ENCODE measurements at regions of chr9 and their contacts with region 1.

Region 1: DNA sequence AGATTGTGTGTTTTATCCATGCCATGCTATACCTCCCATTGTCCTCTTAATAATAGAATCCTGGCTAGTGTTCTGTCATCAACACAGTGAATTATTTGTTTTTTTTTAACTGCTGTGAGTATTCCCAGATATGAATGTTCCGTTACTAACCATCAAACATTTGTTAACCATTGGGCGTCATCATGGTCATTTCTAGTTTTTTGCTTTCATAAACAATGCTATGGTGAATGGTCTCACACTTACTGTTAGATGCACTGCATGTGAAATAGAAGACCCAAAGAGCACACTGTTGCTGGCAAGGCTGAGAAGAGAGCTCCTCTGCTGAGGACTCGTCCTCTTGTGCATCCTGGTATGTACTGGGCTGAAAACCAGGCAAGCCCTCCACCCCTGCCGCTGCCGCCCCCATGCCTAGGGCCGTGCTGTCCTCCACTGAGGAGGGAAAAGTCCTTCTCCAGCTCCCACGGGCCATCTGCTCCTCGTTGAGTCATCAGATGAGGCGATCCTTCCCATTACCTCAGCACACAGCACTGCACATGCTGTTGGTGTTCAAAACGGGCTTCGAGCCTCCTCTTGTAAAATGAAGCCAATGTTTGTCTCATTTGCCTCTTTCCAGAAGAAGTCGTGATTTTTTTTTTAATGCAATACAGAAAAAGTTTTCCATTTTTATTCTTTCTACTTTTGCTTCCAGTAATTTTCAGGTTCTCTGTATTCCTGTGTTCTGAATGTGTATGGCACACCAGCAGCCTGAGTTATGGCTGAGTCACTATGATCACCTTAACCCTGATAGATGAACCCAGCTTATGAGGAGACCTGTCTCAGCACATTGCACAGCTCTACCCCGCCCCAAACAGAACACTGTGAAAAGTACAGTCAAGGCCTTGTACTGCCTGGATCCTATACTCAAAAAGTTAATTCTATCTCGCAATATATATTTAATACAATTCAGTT is 219.0 kb downstream of the AOPEP start:
- DNase-seq: peak; percentile 37 to 57
- ATAC-seq: peak; percentile 72 to 74
- H3K4me3 ChIP-seq: no peak overlapping the region
- H3K27ac ChIP-seq: peak overlapping the region; percentile 37 to 73 (median 64)
- H3K4me1 ChIP-seq: peaks cover 38 to 51% of the 10 kb centered on the region in 2 donors
- H3K27me3 ChIP-seq: no peaks in the 10 kb centered on the region
- CTCF ChIP-seq: no peak
- POLR2A ChIP-seq: no peak

Region 2: GRCh38 chr9:94726495-94727191 is 218.8 kb before region 1 on chr9 and contains the start of gene AOPEP:
- in situ Hi-C with region 1: no loop called
- intact Hi-C with region 1: loop called (anchors 5 kb)
- DNase-seq: peak; percentile 95 to 98
- ATAC-seq: peak; percentile 99 to 100
- H3K4me3 ChIP-seq: peak within 1 kb of the TSS; percentile 78 to 98 (median 88)
- H3K27ac ChIP-seq: peak within 1 kb of the TSS; percentile 87 to 95 (median 93)
- H3K4me1 ChIP-seq: peaks cover 10 to 12% of the 10 kb centered on the region in 2 donors
- H3K27me3 ChIP-seq: no peaks in the 10 kb centered on the region
- CTCF ChIP-seq: peak in 1 of 5 experiments; percentile 22
- POLR2A ChIP-seq: peak; percentile 75 to 76
- total RNA-seq, gene AOPEP: 56.5 to 160 (median 103) TPM